IMR-90 (cell line): ENCODE measurements at regions of chr3 and their contacts with region 1.

Region 1: GRCh38 chr3:66095295-66096001 is 56.7 kb upstream of the MAGI1 start:
- DNase-seq: peak; percentile 77
- ATAC-seq: no peak
- H3K4me3 ChIP-seq: no peak overlapping the region
- H3K27ac ChIP-seq: no peak overlapping the region
- H3K4me1 ChIP-seq: peaks cover 7% of the 10 kb centered on the region
- H3K27me3 ChIP-seq: no peaks in the 10 kb centered on the region
- CTCF ChIP-seq: no peak
- POLR2A ChIP-seq: no peak
- RAD21 ChIP-seq: no peak

Region 2: GRCh38 chr3:66133050-66133757 is 37.8 kb after region 1 on chr3:
- CTCF ChIA-PET with region 1: no interaction called
- POLR2A ChIA-PET with region 1: no interaction called
- dilution Hi-C with region 1: no loop called
- in situ Hi-C with region 1: no loop called
- intact Hi-C with region 1: loop called (anchors 2 kb)
- DNase-seq: peak; percentile 91
- ATAC-seq: peak; percentile 99
- H3K4me3 ChIP-seq: no peak overlapping the region
- H3K27ac ChIP-seq: no peak overlapping the region
- H3K4me1 ChIP-seq: peaks cover 5% of the 10 kb centered on the region
- H3K27me3 ChIP-seq: no peaks in the 10 kb centered on the region
- CTCF ChIP-seq: no peak
- POLR2A ChIP-seq: no peak
- RAD21 ChIP-seq: no peak